ENCODE measurements at regions of chr20 and their contacts with region 1.

Region 1: DNA sequence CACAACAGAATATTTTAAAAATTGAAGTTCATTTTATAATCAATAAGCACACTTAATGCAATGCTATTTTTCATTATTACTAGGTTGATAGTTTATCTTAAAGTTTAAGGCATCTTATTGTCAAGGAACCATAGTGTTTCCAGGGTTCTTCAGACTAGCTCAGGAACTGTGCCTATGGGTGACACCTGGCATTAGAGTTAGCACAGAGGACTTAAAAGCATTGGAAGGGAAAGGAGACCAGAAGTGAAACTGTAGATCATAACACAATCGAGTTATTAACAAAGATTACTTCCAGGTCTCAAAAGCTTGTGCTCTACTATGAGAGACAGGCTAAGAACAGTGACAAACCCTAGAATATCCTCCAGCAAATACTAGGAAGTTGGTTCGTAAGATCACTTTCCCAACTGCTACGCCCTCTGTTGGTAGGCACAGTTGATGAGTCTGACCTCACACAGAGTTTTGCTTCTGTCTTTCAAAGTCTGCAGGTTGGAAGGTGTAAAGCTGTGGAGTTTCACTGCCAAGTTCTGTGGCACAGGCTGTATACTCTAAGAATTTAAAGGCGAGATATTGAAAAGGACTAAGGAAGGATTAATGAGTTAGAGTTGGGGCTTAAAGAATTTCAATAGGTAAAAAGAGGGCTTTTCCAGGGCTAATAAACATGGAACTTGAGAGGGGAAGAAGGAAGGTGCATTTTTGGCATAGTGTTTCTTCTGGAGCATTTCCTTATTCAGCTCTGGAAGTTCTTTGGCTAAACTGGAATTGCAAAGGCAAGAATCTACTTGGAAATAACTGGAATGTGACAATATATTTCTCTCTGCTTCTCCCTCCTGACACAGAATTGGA is 531.3 kb upstream of the JAG1 start:
- DNase-seq: peak; percentile 73
- ATAC-seq: peak; percentile 76
- H3K4me3 ChIP-seq: no peak overlapping the region
- H3K27ac ChIP-seq: no peak overlapping the region
- H3K4me1 ChIP-seq: peaks cover 22 to 29% of the 10 kb centered on the region in 2 experiments
- H3K27me3 ChIP-seq: no peaks in the 10 kb centered on the region
- CTCF ChIP-seq: peak; percentile 50 to 95 (median 91); a peak in 5 of 6 replicates
- POLR2A ChIP-seq: no peak
- RAD21 ChIP-seq: peak; percentile 74

Region 2: GRCh38 chr20:10553326-10553984 is 651.7 kb before region 1 on chr20:
- CTCF ChIA-PET with region 1: interaction called, 4 read pairs
- POLR2A ChIA-PET with region 1: interaction called, 4 read pairs
- RAD21 ChIA-PET with region 1: no interaction called
- intact Hi-C with region 1: loop called (anchors 2 kb)
- DNase-seq: no peak
- ATAC-seq: peak; percentile 84
- H3K4me3 ChIP-seq: no peak overlapping the region
- H3K27ac ChIP-seq: no peak overlapping the region
- H3K4me1 ChIP-seq: peaks cover 56 to 60% of the 10 kb centered on the region in 2 experiments
- H3K27me3 ChIP-seq: no peaks in the 10 kb centered on the region
- CTCF ChIP-seq: peak; percentile 60 to 88 (median 80); a peak in 5 of 6 replicates
- POLR2A ChIP-seq: no peak
- RAD21 ChIP-seq: peak; percentile 90

Region 3: GRCh38 chr20:11001767-11002540 is 203.2 kb before region 1 on chr20:
- CTCF ChIA-PET with region 1: no interaction called
- POLR2A ChIA-PET with region 1: no interaction called
- RAD21 ChIA-PET with region 1: no interaction called
- intact Hi-C with region 1: loop called (anchors 10 kb)
- DNase-seq: peak; percentile 95
- ATAC-seq: peak; percentile 97
- H3K4me3 ChIP-seq: peak overlapping the region; percentile 12 to 32
- H3K27ac ChIP-seq: peak overlapping the region; percentile 49
- H3K4me1 ChIP-seq: peaks cover 13 to 24% of the 10 kb centered on the region in 2 experiments
- H3K27me3 ChIP-seq: no peaks in the 10 kb centered on the region
- CTCF ChIP-seq: no peak
- POLR2A ChIP-seq: no peak
- RAD21 ChIP-seq: peak; percentile 33; the same call in 1 of the 2 replicates

Region 4: DNA sequence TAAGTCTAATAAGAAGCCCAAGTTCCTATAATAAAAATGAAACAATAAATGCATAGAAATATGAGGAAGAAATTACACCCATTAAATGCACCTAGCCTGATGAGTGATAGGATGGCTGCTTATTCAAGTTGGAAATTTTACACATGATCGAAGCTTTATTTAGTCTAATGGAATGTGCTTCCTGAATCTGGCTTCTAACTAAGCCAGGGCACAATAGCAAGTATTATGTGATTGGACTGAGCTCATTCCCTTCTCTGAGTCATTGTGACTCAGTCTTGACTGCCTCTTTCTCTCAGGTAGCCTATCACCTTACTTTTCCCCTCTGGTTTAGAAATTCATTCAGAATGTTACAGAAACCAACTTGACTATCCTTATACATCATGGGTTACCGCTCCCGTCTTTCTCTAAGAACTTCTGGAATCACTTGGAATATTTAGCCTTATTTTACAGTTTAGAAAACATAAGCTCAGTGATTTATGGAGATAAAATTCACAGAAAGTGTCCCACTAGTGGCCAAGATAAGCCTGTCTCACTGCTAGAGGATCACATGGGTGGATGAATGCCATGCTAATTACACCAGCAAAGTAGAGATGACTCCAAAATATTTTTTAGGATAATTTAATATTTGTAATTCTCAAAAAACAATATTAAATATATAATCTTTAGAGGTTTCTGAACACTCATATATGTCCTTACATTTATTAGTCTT is 26.0 kb before region 1 on chr20:
- CTCF ChIA-PET with region 1: interaction called, 16 read pairs
- POLR2A ChIA-PET with region 1: no interaction called
- RAD21 ChIA-PET with region 1: no interaction called
- intact Hi-C with region 1: no loop called
- DNase-seq: peak; percentile 88
- ATAC-seq: peak; percentile 99
- H3K4me3 ChIP-seq: peak overlapping the region in 1 of 2 experiments; percentile 25; a peak in 2 of 4 replicates
- H3K27ac ChIP-seq: peak overlapping the region; percentile 20; the same call in 1 of the 2 replicates
- H3K4me1 ChIP-seq: peaks cover 3 to 12% of the 10 kb centered on the region in 2 experiments; a peak in 3 of 4 replicates
- H3K27me3 ChIP-seq: no peaks in the 10 kb centered on the region
- CTCF ChIP-seq: peak in 2 of 3 experiments; percentile 49 to 52; a peak in 4 of 6 replicates
- POLR2A ChIP-seq: no peak
- RAD21 ChIP-seq: no peak

Region 5: GRCh38 chr20:11255860-11256259 is 50.7 kb after region 1 on chr20:
- CTCF ChIA-PET with region 1: no interaction called
- POLR2A ChIA-PET with region 1: no interaction called
- RAD21 ChIA-PET with region 1: no interaction called
- intact Hi-C with region 1: no loop called
- DNase-seq: no peak
- ATAC-seq: no peak
- H3K4me3 ChIP-seq: no peak overlapping the region
- H3K27ac ChIP-seq: no peak overlapping the region
- H3K4me1 ChIP-seq: peaks cover 0 to 1% of the 10 kb centered on the region in 2 experiments; a peak in 1 of 4 replicates
- H3K27me3 ChIP-seq: no peaks in the 10 kb centered on the region
- CTCF ChIP-seq: no peak
- POLR2A ChIP-seq: no peak
- RAD21 ChIP-seq: no peak

Region 6: GRCh38 chr20:11267131-11267761 is 62.1 kb after region 1 on chr20:
- CTCF ChIA-PET with region 1: interaction called, 11 read pairs
- POLR2A ChIA-PET with region 1: no interaction called
- RAD21 ChIA-PET with region 1: interaction called in 1 of 2 experiments, 5 read pairs
- intact Hi-C with region 1: loop called (anchors 5 kb)
- DNase-seq: peak; percentile 79
- ATAC-seq: peak; percentile 89
- H3K4me3 ChIP-seq: peak overlapping the region in 1 of 2 experiments; percentile 42; a peak in 3 of 4 replicates
- H3K27ac ChIP-seq: peak overlapping the region; percentile 36
- H3K4me1 ChIP-seq: peaks cover 36 to 48% of the 10 kb centered on the region in 2 experiments
- H3K27me3 ChIP-seq: no peaks in the 10 kb centered on the region
- CTCF ChIP-seq: 0 out of 6 replicates have a peak, but pooled peaks of 1 of the 3 experiments have one; percentile 15
- POLR2A ChIP-seq: no peak
- RAD21 ChIP-seq: peak; percentile 57

Region 7: GRCh38 chr20:11366660-11367059 is 161.5 kb after region 1 on chr20:
- CTCF ChIA-PET with region 1: no interaction called
- POLR2A ChIA-PET with region 1: no interaction called
- RAD21 ChIA-PET with region 1: no interaction called
- intact Hi-C with region 1: no loop called
- DNase-seq: no peak
- ATAC-seq: no peak
- H3K4me3 ChIP-seq: no peak overlapping the region
- H3K27ac ChIP-seq: no peak overlapping the region
- H3K4me1 ChIP-seq: no peaks in the 10 kb centered on the region
- H3K27me3 ChIP-seq: no peaks in the 10 kb centered on the region
- CTCF ChIP-seq: no peak
- POLR2A ChIP-seq: no peak
- RAD21 ChIP-seq: no peak

Region 8: GRCh38 chr20:11454966-11455799 is 250.0 kb after region 1 on chr20:
- CTCF ChIA-PET with region 1: no interaction called
- POLR2A ChIA-PET with region 1: no interaction called
- RAD21 ChIA-PET with region 1: no interaction called
- intact Hi-C with region 1: no loop called
- DNase-seq: peak; percentile 90
- ATAC-seq: peak; percentile 76
- H3K4me3 ChIP-seq: peak overlapping the region; percentile 2 to 28; a peak in 2 of 4 replicates
- H3K27ac ChIP-seq: peak overlapping the region; percentile 83
- H3K4me1 ChIP-seq: peaks cover 62% of the 10 kb centered on the region in 2 experiments
- H3K27me3 ChIP-seq: no peaks in the 10 kb centered on the region
- CTCF ChIP-seq: no peak
- POLR2A ChIP-seq: no peak
- RAD21 ChIP-seq: no peak

Measured in HCT116 (cell line).